Ovary (tissue), 10 donors: ENCODE measurements at regions of chr4 and their contacts with region 1.

Region 1: GRCh38 chr4:38319456-38320342 is 344.3 kb upstream of the KLF3 start:
- DNase-seq: peak; percentile 92 to 99 (median 98)
- H3K4me3 ChIP-seq: no peak overlapping the region
- H3K27ac ChIP-seq: peak overlapping the region; percentile 65 to 78
- H3K4me1 ChIP-seq: peaks cover 5% of the 10 kb centered on the region
- H3K27me3 ChIP-seq: no peaks in the 10 kb centered on the region
- CTCF ChIP-seq: peak; percentile 91 to 93 (median 92)
- EP300 ChIP-seq: no peak
- POLR2A ChIP-seq: no peak

Region 2: GRCh38 chr4:38069271-38069760 is 250.4 kb before region 1 on chr4:
- intact Hi-C with region 1: loop called in 3 of 4 experiments (anchors 5 to 10 kb)
- DNase-seq: peak; percentile 73 to 81 (median 78)
- H3K4me3 ChIP-seq: no peak overlapping the region
- H3K27ac ChIP-seq: peak overlapping the region; percentile 48 to 74
- H3K4me1 ChIP-seq: peaks cover 7% of the 10 kb centered on the region
- H3K27me3 ChIP-seq: no peaks in the 10 kb centered on the region
- CTCF ChIP-seq: peak; percentile 52 to 89 (median 75)
- EP300 ChIP-seq: no peak
- POLR2A ChIP-seq: no peak

Region 3: GRCh38 chr4:38078590-38079421 is 240.9 kb before region 1 on chr4:
- intact Hi-C with region 1: loop called in 1 of 4 experiments (anchors 10 kb)
- DNase-seq: no peak
- H3K4me3 ChIP-seq: no peak overlapping the region
- H3K27ac ChIP-seq: peak overlapping the region in 1 of 2 donors; percentile 40
- H3K4me1 ChIP-seq: peaks cover 17% of the 10 kb centered on the region
- H3K27me3 ChIP-seq: no peaks in the 10 kb centered on the region
- CTCF ChIP-seq: no peak
- EP300 ChIP-seq: no peak
- POLR2A ChIP-seq: no peak

Region 4: DNA sequence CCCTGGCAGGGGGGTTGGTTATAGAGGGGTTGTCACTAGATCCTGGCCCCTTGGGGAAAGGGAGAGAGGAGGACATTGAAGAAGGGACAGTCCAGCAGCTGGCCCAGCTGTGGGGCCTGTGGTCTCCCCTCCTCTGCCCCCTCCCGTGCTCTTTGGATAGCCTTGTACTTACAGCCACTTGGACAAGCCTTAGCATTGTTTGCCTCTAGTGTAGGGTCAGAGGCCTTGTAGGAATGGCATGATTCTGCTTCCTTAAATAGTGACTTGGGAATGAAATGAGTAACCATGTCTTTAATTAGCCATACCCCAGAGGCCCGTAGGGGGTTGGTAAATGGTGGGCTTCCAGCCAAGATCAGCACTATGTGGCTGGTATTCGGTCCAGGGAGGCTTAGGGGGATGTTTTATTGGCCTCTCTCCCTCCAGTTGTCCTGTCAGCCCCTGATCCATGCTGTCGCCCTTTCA is 129.0 kb before region 1 on chr4:
- intact Hi-C with region 1: loop called in 3 of 4 experiments (anchors 10 kb)
- DNase-seq: peak in 4 of 5 donors; percentile 24 to 44 (median 36)
- H3K4me3 ChIP-seq: no peak overlapping the region
- H3K27ac ChIP-seq: peak overlapping the region in 1 of 2 donors; percentile 32
- H3K4me1 ChIP-seq: peaks cover 5% of the 10 kb centered on the region
- H3K27me3 ChIP-seq: no peaks in the 10 kb centered on the region
- CTCF ChIP-seq: no peak
- EP300 ChIP-seq: no peak
- POLR2A ChIP-seq: no peak

Region 5: GRCh38 chr4:38675146-38676121 is 355.7 kb after region 1 on chr4:
- intact Hi-C with region 1: loop called (anchors 2 to 10 kb)
- DNase-seq: peak; percentile 72 to 87 (median 74)
- H3K4me3 ChIP-seq: no peak overlapping the region
- H3K27ac ChIP-seq: peak overlapping the region in 1 of 2 donors; percentile 84
- H3K4me1 ChIP-seq: peaks cover 35% of the 10 kb centered on the region
- H3K27me3 ChIP-seq: no peaks in the 10 kb centered on the region
- CTCF ChIP-seq: peak; percentile 80 to 91 (median 89)
- EP300 ChIP-seq: no peak
- POLR2A ChIP-seq: no peak